ENCODE measurements at regions of chr19 and their contacts with region 1.

Region 1: DNA sequence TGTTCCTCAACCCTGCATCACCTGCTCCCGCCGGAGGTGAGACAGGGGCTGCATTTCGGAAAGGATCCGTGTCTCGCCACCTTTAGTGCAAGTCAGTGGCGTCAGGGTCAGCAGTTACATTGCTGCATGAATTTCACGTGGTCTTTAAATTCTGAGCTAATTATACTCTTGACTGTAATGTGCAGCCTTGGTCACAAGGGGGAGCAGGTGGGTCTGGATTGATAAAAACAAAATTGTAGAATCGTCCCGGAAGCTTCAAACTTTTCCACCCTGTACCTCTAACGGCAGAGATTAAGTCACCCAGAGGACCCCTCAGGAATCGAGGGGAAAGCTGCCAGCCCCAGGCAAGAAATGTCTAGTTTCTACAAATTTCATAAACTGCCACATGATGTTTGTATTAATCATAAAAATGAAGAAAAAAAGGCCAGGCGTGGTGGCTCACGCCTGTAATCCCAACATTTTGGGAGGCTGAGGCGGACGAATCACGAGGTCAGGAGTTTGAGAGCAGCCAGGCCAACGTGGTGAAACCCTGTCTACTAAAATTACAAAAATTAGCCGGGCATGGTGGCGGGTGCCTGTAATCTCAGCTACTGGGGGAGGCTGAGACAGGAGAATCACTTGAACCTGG is 20.2 kb downstream of the BBC3 start:
- DNase-seq: peak; percentile 91
- H3K4me3 ChIP-seq: no peak overlapping the region
- H3K27ac ChIP-seq: peak overlapping the region; percentile 75
- H3K4me1 ChIP-seq: peaks cover 8% of the 10 kb centered on the region
- H3K27me3 ChIP-seq: no peaks in the 10 kb centered on the region
- CTCF ChIP-seq: peak; percentile 69 to 85
- POLR2A ChIP-seq: no peak

Region 2: GRCh38 chr19:46803555-46803954 is 407.2 kb before region 1 on chr19:
- CTCF ChIA-PET with region 1: no interaction called
- POLR2A ChIA-PET with region 1: no interaction called
- dilution Hi-C with region 1: no loop called
- intact Hi-C with region 1: no loop called
- DNase-seq: no peak
- H3K4me3 ChIP-seq: no peak overlapping the region
- H3K27ac ChIP-seq: no peak overlapping the region
- H3K4me1 ChIP-seq: no peaks in the 10 kb centered on the region
- H3K27me3 ChIP-seq: no peaks in the 10 kb centered on the region
- CTCF ChIP-seq: no peak
- POLR2A ChIP-seq: no peak

Region 3: DNA sequence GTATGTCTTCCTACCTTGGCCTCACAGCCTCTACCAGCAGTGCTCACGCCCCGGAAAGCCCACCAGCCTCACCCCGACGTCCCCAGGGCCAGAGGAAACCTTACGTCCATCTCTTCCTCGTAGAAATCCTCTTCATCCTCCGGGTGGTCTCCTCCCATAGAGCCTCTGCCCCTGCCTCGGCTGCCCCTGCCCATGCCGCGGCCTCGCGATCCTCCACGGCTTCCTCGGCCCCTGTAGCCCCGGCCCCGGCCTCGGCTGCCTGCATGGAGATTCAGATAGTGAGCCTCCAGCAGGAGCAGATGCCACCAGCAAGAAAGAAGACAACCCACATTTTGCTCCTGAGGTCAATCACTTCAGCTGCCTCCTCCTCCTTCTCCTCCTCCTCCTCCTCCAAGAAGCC is 124.5 kb before region 1 on chr19:
- CTCF ChIA-PET with region 1: no interaction called
- POLR2A ChIA-PET with region 1: no interaction called
- dilution Hi-C with region 1: no loop called
- intact Hi-C with region 1: no loop called
- DNase-seq: no peak
- H3K4me3 ChIP-seq: no peak overlapping the region
- H3K27ac ChIP-seq: no peak overlapping the region
- H3K4me1 ChIP-seq: no peaks in the 10 kb centered on the region
- H3K27me3 ChIP-seq: no peaks in the 10 kb centered on the region
- CTCF ChIP-seq: no peak
- POLR2A ChIP-seq: no peak

Region 4: GRCh38 chr19:47152224-47153017 is 58.4 kb before region 1 on chr19:
- CTCF ChIA-PET with region 1: interaction called, 73 read pairs
- POLR2A ChIA-PET with region 1: no interaction called
- dilution Hi-C with region 1: loop called (anchors 10 kb)
- intact Hi-C with region 1: loop called (anchors 1 kb)
- DNase-seq: peak; percentile 77
- H3K4me3 ChIP-seq: no peak overlapping the region
- H3K27ac ChIP-seq: peak overlapping the region; percentile 36
- H3K4me1 ChIP-seq: peaks cover 26% of the 10 kb centered on the region
- H3K27me3 ChIP-seq: no peaks in the 10 kb centered on the region
- CTCF ChIP-seq: no peak
- POLR2A ChIP-seq: no peak

Region 5: GRCh38 chr19:47176627-47177090 is 34.1 kb before region 1 on chr19:
- CTCF ChIA-PET with region 1: interaction called, 30 read pairs
- POLR2A ChIA-PET with region 1: interaction called, 3 read pairs
- dilution Hi-C with region 1: no loop called
- intact Hi-C with region 1: no loop called
- DNase-seq: peak; percentile 100
- H3K4me3 ChIP-seq: peak overlapping the region in 1 of 3 experiments; percentile 15
- H3K27ac ChIP-seq: peak overlapping the region; percentile 97
- H3K4me1 ChIP-seq: peaks cover 49% of the 10 kb centered on the region
- H3K27me3 ChIP-seq: no peaks in the 10 kb centered on the region
- CTCF ChIP-seq: no peak
- POLR2A ChIP-seq: no peak

Region 6: DNA sequence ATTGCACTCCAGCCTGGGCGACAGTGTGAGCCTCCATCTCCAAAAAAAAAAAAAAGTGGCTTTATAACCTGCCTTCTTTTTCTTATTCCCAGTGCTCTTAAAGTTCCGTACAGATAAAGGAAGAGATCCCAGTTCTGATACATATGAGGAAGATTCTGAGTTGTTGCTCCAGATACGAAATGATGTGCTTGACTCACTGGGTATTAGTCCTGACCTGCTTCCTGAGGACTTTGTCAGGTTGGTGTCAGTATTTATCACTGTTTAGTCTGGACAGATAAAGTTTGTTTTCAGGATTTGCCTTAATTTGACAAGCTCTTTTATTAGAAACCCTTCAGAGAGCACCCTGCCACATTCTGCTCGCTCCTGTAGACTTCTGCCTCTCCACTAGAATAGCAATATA is 13.7 kb before region 1 on chr19:
- CTCF ChIA-PET with region 1: interaction called, 49 read pairs
- POLR2A ChIA-PET with region 1: no interaction called
- dilution Hi-C with region 1: no loop called
- intact Hi-C with region 1: no loop called
- DNase-seq: no peak
- H3K4me3 ChIP-seq: no peak overlapping the region
- H3K27ac ChIP-seq: no peak overlapping the region
- H3K4me1 ChIP-seq: peaks cover 4% of the 10 kb centered on the region
- H3K27me3 ChIP-seq: no peaks in the 10 kb centered on the region
- CTCF ChIP-seq: no peak
- POLR2A ChIP-seq: no peak

Region 7: DNA sequence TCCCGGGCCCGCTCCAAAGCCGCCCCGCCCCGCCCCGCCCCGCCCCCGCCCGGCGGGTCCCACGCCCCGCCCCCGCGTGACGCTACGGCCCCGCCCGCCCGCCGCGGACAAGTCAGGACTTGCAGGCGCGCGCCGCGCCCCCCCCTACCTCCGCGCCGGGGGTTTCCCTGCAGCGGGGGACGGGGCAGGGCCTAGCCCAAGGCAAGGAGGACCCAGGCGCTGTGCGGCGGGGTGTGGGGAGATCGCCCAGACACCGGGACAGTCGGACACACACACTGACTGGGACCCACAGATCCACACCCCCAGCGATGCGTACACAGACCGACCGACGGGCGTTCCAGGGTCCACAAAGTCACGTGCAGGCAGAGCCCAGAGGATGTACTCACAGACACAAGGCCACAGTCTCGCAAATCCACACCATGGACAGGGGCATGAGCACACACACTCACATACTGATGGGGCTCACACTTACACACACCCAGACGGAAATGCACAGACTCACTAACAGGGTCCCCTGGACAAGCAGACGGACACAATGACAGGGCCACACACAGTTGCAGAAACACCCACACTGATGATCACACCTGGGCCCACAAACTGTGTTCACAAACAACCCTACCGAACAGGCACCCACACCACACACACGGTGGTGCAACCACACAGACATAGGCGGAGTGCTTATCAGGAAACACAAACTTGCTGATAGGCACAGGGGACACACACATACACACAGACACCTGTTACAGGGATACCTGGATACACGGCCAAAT is 20.6 kb after region 1 on chr19:
- CTCF ChIA-PET with region 1: interaction called, 51 read pairs
- POLR2A ChIA-PET with region 1: interaction called, 24 read pairs
- dilution Hi-C with region 1: no loop called
- intact Hi-C with region 1: loop called (anchors 1 kb)
- DNase-seq: peak; percentile 91
- H3K4me3 ChIP-seq: peak overlapping the region in 2 of 3 experiments; percentile 14 to 38
- H3K27ac ChIP-seq: peak overlapping the region; percentile 56
- H3K4me1 ChIP-seq: peaks cover 31% of the 10 kb centered on the region
- H3K27me3 ChIP-seq: no peaks in the 10 kb centered on the region
- CTCF ChIP-seq: no peak
- POLR2A ChIP-seq: peak; percentile 64

Measured in endothelial cell of umbilical vein (primary cell).